Dendritic cell treated with granulocyte-macrophage colony-stimulating factor and Interleukin-4, amounts not matched to agents 40 ng/mL and 50 ng/mL, for 4 days (primary cell): ENCODE measurements at regions of chr12 and their contacts with region 1.

Region 1: GRCh38 chr12:9940375-9940774 is 8.2 kb upstream of the CLEC2A start:
- H3K4me3 Mint-ChIP-seq: no peak overlapping the region
- H3K27ac Mint-ChIP-seq: no peak overlapping the region
- H3K4me1 Mint-ChIP-seq: peaks cover 22% of the 10 kb centered on the region
- H3K27me3 Mint-ChIP-seq: no peaks in the 10 kb centered on the region

Region 2: DNA sequence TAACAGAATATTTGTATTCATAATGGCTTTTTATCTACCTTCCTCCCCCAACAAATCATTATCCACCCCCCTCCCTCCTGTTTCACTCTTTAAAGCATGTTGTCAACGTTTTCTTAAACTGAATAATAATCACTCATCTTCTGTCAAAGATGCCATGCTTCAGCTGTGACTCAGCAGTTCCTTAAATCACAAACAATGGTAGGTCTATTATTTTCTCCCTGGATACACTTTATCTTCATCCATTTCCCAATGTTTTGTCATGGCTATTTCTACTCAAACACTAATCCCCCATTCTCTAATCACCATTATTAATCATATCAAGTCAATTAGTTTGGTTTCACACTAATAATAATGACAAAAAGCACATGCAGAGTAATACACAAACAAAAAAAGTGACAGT is 76.5 kb after region 1 on chr12:
- intact Hi-C with region 1: loop called (anchors 5 kb)
- H3K4me3 Mint-ChIP-seq: no peak overlapping the region
- H3K27ac Mint-ChIP-seq: peak overlapping the region; percentile 46
- H3K4me1 Mint-ChIP-seq: peaks cover 15% of the 10 kb centered on the region
- H3K27me3 Mint-ChIP-seq: no peaks in the 10 kb centered on the region